Adrenal gland (tissue), 19 donors: ENCODE measurements at regions of chr19 and their contacts with region 1.

Region 1: DNA sequence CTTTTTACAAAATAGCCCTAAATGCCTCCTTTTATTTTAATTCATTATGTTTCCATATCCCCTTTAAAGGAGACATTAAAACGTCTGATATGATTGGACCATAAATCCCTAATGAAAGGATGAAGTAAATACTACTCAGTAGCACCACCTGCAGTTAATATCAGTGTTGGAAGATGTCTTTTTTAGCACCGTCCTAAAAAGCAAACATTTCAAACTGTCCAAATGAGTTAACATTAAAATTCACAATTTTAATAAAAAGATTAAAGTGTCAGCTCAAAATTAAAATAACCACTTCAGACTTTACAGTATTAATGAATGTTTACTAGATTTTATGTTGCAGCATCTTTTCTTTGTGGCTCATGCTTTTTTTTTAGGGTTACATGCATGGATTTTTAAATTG is 12.3 kb downstream of the ZNF507 start:
- DNase-seq: no peak
- H3K4me3 ChIP-seq: no peak overlapping the region
- H3K27ac ChIP-seq: no peak overlapping the region
- H3K4me1 ChIP-seq: peaks cover 2 to 8% of the 10 kb centered on the region in 2 donors
- H3K27me3 ChIP-seq: no peaks in the 10 kb centered on the region
- CTCF ChIP-seq: peak in 3 of 6 experiments; percentile 11 to 25 (median 24)
- POLR2A ChIP-seq: no peak

Region 2: GRCh38 chr19:32405431-32406161 is 47.9 kb after region 1 on chr19 and contains the start of gene DPY19L3:
- intact Hi-C with region 1: loop called in 1 of 2 experiments (anchors 5 kb)
- DNase-seq: peak; percentile 93 to 97 (median 95)
- H3K4me3 ChIP-seq: peak within 1 kb of the TSS; percentile 60 to 99 (median 72)
- H3K27ac ChIP-seq: peak within 1 kb of the TSS; percentile 84 to 98 (median 95)
- H3K4me1 ChIP-seq: peaks cover 6 to 22% of the 10 kb centered on the region in 2 donors
- H3K27me3 ChIP-seq: no peaks in the 10 kb centered on the region
- CTCF ChIP-seq: no peak
- POLR2A ChIP-seq: peak; percentile 75 to 87
- total RNA-seq, gene DPY19L3: 19.6 to 31.0 (median 23.4) TPM